ENCODE measurements at regions of chr16 and their contacts with region 1.

Region 1: DNA sequence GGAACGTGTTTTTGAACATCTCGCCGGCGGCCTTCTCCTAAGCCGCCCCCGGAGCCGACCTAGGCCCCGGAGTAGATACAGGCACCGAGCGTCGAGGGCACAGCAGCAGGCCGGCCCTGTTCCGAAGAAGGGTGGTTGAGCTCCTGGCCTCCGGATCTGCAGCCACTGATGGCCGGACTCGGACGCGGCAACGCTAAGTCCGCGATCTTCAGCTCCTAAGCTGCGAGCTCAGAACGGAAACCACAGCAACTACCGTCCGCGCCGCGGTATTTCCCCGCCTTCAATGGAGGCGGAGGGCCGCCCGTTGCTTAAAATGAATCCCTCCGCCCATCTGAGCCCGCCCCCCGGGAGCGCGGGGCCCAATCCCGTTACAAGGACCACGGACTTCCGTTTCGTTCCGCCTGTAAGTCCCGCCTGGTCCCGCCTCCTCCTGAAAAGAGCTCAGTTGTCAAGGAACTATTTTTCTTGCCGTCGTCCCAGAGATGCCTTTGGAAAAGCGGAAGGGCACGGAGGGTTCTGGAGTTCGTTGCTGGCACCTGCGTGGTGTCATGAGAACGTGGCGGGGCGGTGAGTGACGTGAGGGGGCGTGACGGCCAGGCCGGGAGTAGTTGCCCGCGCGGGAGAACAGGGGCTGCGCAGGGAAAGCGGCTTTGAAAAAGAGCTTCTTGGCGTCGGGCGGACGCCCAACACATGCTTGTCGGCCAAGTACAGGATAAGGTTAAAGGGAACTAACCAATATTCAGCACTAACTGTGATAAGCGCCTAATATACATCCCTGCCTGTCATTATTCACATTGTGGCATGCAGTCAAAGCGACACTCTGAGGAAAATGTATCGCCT is at the start of gene CFAP20:
- DNase-seq: peak; percentile 99
- H3K4me3 ChIP-seq: peak within 1 kb of the TSS; percentile 76 to 97 (median 86)
- H3K27ac ChIP-seq: peak within 1 kb of the TSS; percentile 88 to 93 (median 92)
- H3K4me1 ChIP-seq: peaks cover 39 to 48% (median 46%) of the 10 kb centered on the region in 4 donors
- H3K27me3 ChIP-seq: no peaks in the 10 kb centered on the region
- CTCF ChIP-seq: peak in 1 of 3 experiments; percentile 19
- EP300 ChIP-seq: no peak
- POLR2A ChIP-seq: peak; percentile 77
- total RNA-seq, gene CFAP20: 12.5 to 31.2 (median 23.5) TPM

Region 2: GRCh38 chr16:57734925-57735754 is 394.2 kb before region 1 on chr16:
- intact Hi-C with region 1: loop called (anchors 10 kb)
- DNase-seq: peak; percentile 100
- H3K4me3 ChIP-seq: peak overlapping the region; percentile 78 to 98 (median 88)
- H3K27ac ChIP-seq: peak overlapping the region; percentile 85 to 90 (median 88)
- H3K4me1 ChIP-seq: peaks cover 18 to 40% (median 27%) of the 10 kb centered on the region in 4 donors
- H3K27me3 ChIP-seq: no peaks in the 10 kb centered on the region
- CTCF ChIP-seq: peak in 1 of 3 experiments; percentile 36
- EP300 ChIP-seq: no peak
- POLR2A ChIP-seq: no peak

Region 3: GRCh38 chr16:57899771-57900661 is 229.3 kb before region 1 on chr16:
- intact Hi-C with region 1: loop called (anchors 10 kb)
- DNase-seq: no peak
- H3K4me3 ChIP-seq: no peak overlapping the region
- H3K27ac ChIP-seq: no peak overlapping the region
- H3K4me1 ChIP-seq: no peaks in the 10 kb centered on the region
- H3K27me3 ChIP-seq: peaks cover 0 to 48% (median 2%) of the 10 kb centered on the region in 4 donors
- CTCF ChIP-seq: peak; percentile 79 to 83 (median 82)
- EP300 ChIP-seq: no peak
- POLR2A ChIP-seq: no peak

Region 4: DNA sequence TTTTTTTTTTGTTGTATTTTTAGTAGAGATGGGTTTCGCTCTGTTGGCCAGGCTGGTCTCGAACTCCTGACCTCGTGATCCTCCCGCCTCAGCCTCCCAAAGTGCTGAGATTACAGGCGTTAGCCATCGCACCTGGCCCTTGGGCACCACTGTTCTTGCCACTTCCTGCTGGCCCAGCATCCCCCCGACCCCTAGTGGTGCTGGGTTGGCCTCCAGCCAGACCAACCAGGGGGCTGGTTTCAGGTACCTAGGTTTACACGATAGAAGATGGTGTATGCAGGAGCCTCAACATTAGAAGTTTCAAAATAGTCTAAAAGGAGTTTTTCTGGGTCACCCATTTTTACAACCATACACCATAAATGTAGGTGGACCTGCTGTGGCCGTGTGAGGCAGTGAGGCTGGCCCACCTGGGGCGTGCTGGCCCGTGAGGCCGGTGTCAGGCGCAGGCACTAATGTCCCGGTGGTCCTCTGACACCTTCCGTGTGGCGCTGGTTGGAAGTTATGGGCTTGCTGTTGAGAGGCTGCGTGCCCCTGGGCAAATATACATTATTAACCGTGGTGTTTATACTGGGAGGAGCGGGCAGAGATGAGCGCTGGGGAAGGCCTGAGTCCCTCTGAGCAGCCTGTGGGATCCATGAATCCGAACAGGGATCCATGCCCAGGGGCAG is 43.6 kb before region 1 on chr16:
- intact Hi-C with region 1: no loop called
- DNase-seq: no peak
- H3K4me3 ChIP-seq: no peak overlapping the region
- H3K27ac ChIP-seq: no peak overlapping the region
- H3K4me1 ChIP-seq: peaks cover 0 to 12% (median 9%) of the 10 kb centered on the region in 4 donors
- H3K27me3 ChIP-seq: no peaks in the 10 kb centered on the region
- CTCF ChIP-seq: no peak
- EP300 ChIP-seq: no peak
- POLR2A ChIP-seq: no peak

Region 5: GRCh38 chr16:58198022-58198683 is 68.8 kb after region 1 on chr16 and contains the start of gene CSNK2A2:
- intact Hi-C with region 1: loop called (anchors 5 kb)
- DNase-seq: no peak
- H3K4me3 ChIP-seq: peak within 1 kb of the TSS; percentile 66 to 95 (median 80)
- H3K27ac ChIP-seq: peak within 1 kb of the TSS; percentile 57 to 72 (median 62)
- H3K4me1 ChIP-seq: peaks cover 23 to 39% (median 30%) of the 10 kb centered on the region in 4 donors
- H3K27me3 ChIP-seq: peaks cover 0 to 9% (median 0%) of the 10 kb centered on the region in 4 donors
- CTCF ChIP-seq: peak; percentile 28 to 53 (median 53)
- EP300 ChIP-seq: no peak
- POLR2A ChIP-seq: no peak
- total RNA-seq, gene CSNK2A2: 37.1 to 56.5 (median 42.7) TPM

Region 6: DNA sequence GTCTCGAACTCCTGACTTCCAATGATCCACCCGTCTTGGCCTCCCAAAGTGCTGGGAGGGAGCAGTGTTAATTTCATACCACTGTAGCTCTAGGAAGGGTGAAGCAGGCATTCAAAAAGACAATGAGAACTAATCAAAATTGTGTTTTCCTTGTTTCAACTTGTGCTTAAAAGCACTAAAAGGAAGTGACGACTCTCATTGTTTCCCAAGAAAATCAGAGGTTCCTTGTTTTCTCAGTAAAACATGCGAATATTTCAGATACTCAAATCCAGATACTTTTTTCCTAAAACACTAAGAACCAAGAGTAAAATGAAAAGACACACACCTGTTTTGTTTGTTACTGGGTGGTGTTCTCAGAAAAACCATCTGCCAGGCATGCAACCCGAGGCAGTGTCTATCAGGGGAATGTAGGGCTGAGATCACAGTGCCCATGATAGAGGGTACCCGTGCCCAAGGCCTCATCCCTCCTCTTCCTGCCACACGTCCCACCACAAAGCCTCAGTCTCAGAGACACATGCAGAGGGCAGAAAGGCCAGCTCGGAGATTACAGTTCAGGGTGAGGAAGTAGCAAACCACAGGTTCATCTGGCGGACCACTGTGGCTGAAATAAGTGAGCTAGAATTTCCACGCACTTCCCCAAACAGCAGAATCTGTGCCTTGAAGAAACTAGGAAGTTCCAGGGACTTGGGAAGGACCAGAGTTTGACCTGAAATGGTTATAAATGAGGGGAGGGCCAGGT is 296.6 kb after region 1 on chr16:
- intact Hi-C with region 1: no loop called
- DNase-seq: no peak
- H3K4me3 ChIP-seq: no peak overlapping the region
- H3K27ac ChIP-seq: no peak overlapping the region
- H3K4me1 ChIP-seq: no peaks in the 10 kb centered on the region
- H3K27me3 ChIP-seq: peaks cover 0 to 26% (median 0%) of the 10 kb centered on the region in 4 donors
- CTCF ChIP-seq: no peak
- EP300 ChIP-seq: no peak
- POLR2A ChIP-seq: no peak